ENCODE measurements at regions of chr14 and their contacts with region 1.

Region 1: GRCh38 chr14:64303471-64303917 is 9.3 kb upstream of the ESR2 start:
- DNase-seq: no peak
- ATAC-seq: peak; percentile 77 to 88 (median 82)
- H3K4me3 ChIP-seq: no peak overlapping the region
- H3K27ac ChIP-seq: no peak overlapping the region
- H3K4me1 ChIP-seq: no peaks in the 10 kb centered on the region
- H3K27me3 ChIP-seq: no peaks in the 10 kb centered on the region
- CTCF ChIP-seq: peak; percentile 80

Region 2: GRCh38 chr14:63795532-63795931 is 508.0 kb before region 1 on chr14:
- intact Hi-C with region 1: loop called in 1 of 2 experiments (anchors 5 kb)
- DNase-seq: no peak
- ATAC-seq: no peak
- H3K4me3 ChIP-seq: no peak overlapping the region
- H3K27ac ChIP-seq: no peak overlapping the region
- H3K4me1 ChIP-seq: no peaks in the 10 kb centered on the region
- H3K27me3 ChIP-seq: no peaks in the 10 kb centered on the region
- CTCF ChIP-seq: no peak

Region 3: DNA sequence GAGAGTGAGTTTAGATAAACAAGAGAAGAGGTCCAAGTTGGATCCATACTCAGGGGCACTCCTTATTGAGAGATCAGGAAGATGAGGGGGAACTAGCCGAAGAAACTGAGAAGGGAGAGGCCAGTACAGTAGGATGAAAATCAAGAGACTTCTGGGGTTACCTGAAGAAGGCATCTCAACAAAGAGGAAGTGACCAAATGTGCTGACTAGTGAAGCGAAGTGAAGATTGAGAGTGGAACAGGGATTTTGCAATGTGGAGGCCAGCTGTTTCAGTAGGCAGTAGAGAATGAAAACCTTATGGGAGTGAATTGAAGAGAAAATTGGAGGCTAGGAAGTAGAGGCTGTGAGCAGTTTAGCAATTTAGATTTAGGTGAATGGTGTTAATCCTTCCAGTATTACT is 297.7 kb before region 1 on chr14:
- intact Hi-C with region 1: loop called in 1 of 2 experiments (anchors 2 kb)
- DNase-seq: no peak
- ATAC-seq: no peak
- H3K4me3 ChIP-seq: no peak overlapping the region
- H3K27ac ChIP-seq: no peak overlapping the region
- H3K4me1 ChIP-seq: no peaks in the 10 kb centered on the region
- H3K27me3 ChIP-seq: no peaks in the 10 kb centered on the region
- CTCF ChIP-seq: no peak

Region 4: GRCh38 chr14:64232095-64232838 is 71.2 kb before region 1 on chr14:
- intact Hi-C with region 1: loop called in 1 of 2 experiments (anchors 5 kb)
- DNase-seq: peak in 1 of 2 donors; percentile 55
- ATAC-seq: peak; percentile 89 to 97 (median 94)
- H3K4me3 ChIP-seq: no peak overlapping the region
- H3K27ac ChIP-seq: peak overlapping the region; percentile 90
- H3K4me1 ChIP-seq: peaks cover 24% of the 10 kb centered on the region
- H3K27me3 ChIP-seq: no peaks in the 10 kb centered on the region
- CTCF ChIP-seq: no peak

Region 5: DNA sequence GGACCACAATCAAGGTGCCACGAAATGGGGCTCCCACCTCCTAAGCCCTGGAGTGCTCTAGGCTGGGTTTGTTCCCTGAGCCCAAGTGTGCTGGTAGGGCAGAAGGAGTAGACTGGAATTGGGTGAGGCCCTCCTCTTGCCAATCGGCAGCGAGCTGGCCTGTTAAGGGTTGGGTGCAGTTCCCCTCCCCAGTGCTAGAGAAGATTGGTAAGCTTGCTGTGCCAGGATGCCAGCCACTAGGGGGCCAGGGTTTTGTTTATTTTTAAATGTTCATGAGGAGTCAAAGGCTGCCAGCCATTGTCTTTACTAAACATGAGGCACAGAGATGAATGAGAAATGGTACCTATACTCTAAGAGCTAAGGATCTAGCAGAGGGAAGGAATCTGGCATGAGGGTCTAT is 496.5 kb after region 1 on chr14:
- intact Hi-C with region 1: no loop called
- DNase-seq: no peak
- ATAC-seq: peak; percentile 21 to 75 (median 56)
- H3K4me3 ChIP-seq: no peak overlapping the region
- H3K27ac ChIP-seq: peak overlapping the region; percentile 39
- H3K4me1 ChIP-seq: no peaks in the 10 kb centered on the region
- H3K27me3 ChIP-seq: no peaks in the 10 kb centered on the region
- CTCF ChIP-seq: peak; percentile 55

Measured in psoas muscle (tissue), 8 donors.